Activated CD8-positive, alpha-beta T cell treated with anti-CD3 and anti-CD28 coated beads for 36 hours (primary cell): ENCODE measurements at regions of chr12 and their contacts with region 1.

Region 1: GRCh38 chr12:111024205-111024801 is 103.9 kb upstream of the MYL2 start:
- DNase-seq: peak; percentile 65
- ATAC-seq: peak; percentile 81
- H3K4me3 Mint-ChIP-seq: no peak overlapping the region
- H3K27ac Mint-ChIP-seq: no peak overlapping the region
- H3K4me1 Mint-ChIP-seq: peaks cover 3% of the 10 kb centered on the region
- H3K27me3 Mint-ChIP-seq: peaks cover 10% of the 10 kb centered on the region
- CTCF ChIP-seq: peak; percentile 85

Region 2: GRCh38 chr12:111010061-111010460 is 14.2 kb before region 1 on chr12:
- CTCF ChIA-PET with region 1: interaction called, 10 read pairs
- POLR2A ChIA-PET with region 1: no interaction called
- intact Hi-C with region 1: no loop called
- DNase-seq: no peak
- ATAC-seq: no peak
- H3K4me3 Mint-ChIP-seq: no peak overlapping the region
- H3K27ac Mint-ChIP-seq: no peak overlapping the region
- H3K4me1 Mint-ChIP-seq: no peaks in the 10 kb centered on the region
- H3K27me3 Mint-ChIP-seq: peaks cover 15% of the 10 kb centered on the region
- CTCF ChIP-seq: no peak

Region 3: DNA sequence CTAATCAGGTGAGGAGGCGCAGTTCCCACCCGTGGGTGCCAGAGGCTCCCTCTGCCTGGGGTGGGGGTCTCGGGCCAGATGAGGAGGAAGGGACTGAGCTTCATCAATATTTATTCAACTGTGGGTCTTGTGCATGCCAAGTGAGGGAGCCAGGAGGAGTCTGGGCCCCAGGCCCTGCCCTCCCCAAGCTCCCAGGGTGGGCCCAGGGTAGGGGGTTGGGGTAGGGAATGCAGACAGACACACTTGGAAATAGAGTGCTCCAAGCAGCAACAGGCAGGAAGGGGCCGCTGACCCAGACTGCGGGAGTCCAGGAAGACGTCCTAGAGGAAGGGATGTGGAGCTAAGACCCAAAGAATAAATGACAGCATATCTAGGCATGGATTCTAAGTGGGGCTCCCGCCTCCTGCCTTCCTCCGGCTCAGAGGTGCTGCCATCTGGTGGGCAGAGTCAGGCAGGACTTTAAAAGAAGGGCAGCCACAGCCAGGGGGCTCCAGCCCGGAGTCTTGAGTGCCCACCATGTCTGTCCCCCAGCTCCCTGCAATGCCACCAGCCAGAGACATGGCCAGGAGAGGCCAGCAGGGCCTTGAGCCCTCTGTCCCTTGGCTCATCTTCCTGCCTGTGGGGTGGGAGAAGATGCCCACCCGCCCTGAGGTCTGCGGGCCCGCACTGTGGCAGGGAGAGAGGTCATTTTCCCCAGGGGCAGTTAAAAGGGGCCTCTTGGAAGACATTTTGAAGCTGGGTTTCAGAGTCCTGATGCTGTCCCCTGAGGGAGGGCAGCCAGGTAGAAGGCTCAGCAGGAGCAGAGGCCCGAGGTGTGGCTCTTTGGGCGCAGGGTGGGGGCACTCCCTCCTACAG is 274.5 kb after region 1 on chr12:
- CTCF ChIA-PET with region 1: interaction called, 13 read pairs
- POLR2A ChIA-PET with region 1: no interaction called
- intact Hi-C with region 1: no loop called
- DNase-seq: peak; percentile 69
- ATAC-seq: peak; percentile 66
- H3K4me3 Mint-ChIP-seq: no peak overlapping the region
- H3K27ac Mint-ChIP-seq: no peak overlapping the region
- H3K4me1 Mint-ChIP-seq: no peaks in the 10 kb centered on the region
- H3K27me3 Mint-ChIP-seq: peaks cover 3% of the 10 kb centered on the region
- CTCF ChIP-seq: peak; percentile 82

Region 4: DNA sequence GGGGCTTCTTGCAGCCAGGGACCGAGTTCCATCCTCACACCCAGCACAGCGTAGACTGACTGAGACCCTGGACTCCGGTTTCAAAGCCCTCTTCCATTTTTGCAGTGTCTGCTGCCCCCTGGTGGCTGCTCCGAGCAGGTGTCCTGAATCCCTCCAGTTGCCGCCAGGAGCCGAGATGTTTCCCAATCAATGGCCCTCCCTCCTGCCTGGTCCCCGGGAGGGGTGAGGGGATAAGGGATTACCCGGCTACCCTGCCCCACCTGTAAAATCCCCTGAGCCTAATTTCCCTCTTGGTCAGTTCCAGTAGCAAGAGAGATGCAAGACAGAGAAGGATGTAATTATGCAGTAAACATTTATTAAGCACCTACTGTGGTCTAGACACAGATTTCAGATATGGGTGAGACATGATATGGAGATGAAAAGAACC is 289.5 kb after region 1 on chr12:
- CTCF ChIA-PET with region 1: interaction called, 4 read pairs
- POLR2A ChIA-PET with region 1: no interaction called
- intact Hi-C with region 1: loop called (anchors 10 kb)
- DNase-seq: peak; percentile 79
- ATAC-seq: peak; percentile 72
- H3K4me3 Mint-ChIP-seq: no peak overlapping the region
- H3K27ac Mint-ChIP-seq: no peak overlapping the region
- H3K4me1 Mint-ChIP-seq: peaks cover 5% of the 10 kb centered on the region
- H3K27me3 Mint-ChIP-seq: peaks cover 8% of the 10 kb centered on the region
- CTCF ChIP-seq: peak; percentile 97